PC-3 (cell line): ENCODE measurements at regions of chr1 and their contacts with region 1.

Region 1: GRCh38 chr1:226827968-226828513 is 42.4 kb upstream of the PSEN2 start:
- DNase-seq: peak; percentile 99
- ATAC-seq: peak; percentile 100
- H3K4me3 ChIP-seq: no peak overlapping the region
- H3K27ac ChIP-seq: peak overlapping the region; percentile 3; the same call in 1 of the 2 replicates
- H3K4me1 ChIP-seq: peaks cover 15% of the 10 kb centered on the region
- H3K27me3 ChIP-seq: no peaks in the 10 kb centered on the region
- CTCF ChIP-seq: peak; percentile 99

Region 2: DNA sequence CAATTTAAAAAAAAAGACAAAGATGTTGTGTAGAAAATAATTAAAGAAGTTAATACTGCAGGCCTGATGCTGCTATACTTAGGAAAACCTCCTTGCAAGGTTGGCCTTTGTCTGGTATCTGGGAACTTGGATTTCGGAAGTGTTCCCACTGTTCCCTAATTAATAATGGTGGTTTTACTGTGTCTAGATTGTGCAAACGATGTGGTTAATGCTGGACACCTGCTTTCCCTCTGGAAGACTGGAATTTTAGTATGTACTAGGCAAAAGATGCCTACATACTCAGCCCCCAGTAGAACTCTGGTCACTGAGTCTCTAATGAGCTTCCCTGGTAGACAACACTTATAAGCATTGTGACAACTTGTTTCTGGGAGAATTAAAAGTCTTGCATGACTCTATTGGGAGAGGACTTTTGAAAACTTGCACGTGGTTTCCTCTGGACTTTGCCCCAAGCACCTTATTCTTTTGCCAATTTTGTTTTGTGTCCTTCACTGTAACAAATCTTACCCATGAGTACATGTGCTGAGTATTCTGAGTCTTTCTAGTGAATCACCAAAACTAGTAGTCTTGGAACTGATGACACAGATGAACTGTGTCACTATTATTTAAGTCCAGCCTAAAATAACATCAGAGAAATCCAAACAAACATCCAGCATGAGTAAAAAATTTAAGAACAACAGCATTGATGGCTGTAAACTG is 559.5 kb before region 1 on chr1:
- CTCF ChIA-PET with region 1: no interaction called
- POLR2A ChIA-PET with region 1: no interaction called
- intact Hi-C with region 1: no loop called
- DNase-seq: peak; percentile 64
- ATAC-seq: peak; percentile 92
- H3K4me3 ChIP-seq: no peak overlapping the region
- H3K27ac ChIP-seq: peak overlapping the region; percentile 21
- H3K4me1 ChIP-seq: peaks cover 14% of the 10 kb centered on the region
- H3K27me3 ChIP-seq: no peaks in the 10 kb centered on the region
- CTCF ChIP-seq: no peak

Region 3: GRCh38 chr1:226626577-226626956 is 201.5 kb before region 1 on chr1:
- CTCF ChIA-PET with region 1: interaction called, 5 read pairs
- POLR2A ChIA-PET with region 1: no interaction called
- intact Hi-C with region 1: loop called (anchors 2 kb)
- DNase-seq: peak; percentile 88
- ATAC-seq: peak; percentile 79
- H3K4me3 ChIP-seq: no peak overlapping the region
- H3K27ac ChIP-seq: no peak overlapping the region
- H3K4me1 ChIP-seq: peaks cover 13% of the 10 kb centered on the region
- H3K27me3 ChIP-seq: no peaks in the 10 kb centered on the region
- CTCF ChIP-seq: peak; percentile 100

Region 4: DNA sequence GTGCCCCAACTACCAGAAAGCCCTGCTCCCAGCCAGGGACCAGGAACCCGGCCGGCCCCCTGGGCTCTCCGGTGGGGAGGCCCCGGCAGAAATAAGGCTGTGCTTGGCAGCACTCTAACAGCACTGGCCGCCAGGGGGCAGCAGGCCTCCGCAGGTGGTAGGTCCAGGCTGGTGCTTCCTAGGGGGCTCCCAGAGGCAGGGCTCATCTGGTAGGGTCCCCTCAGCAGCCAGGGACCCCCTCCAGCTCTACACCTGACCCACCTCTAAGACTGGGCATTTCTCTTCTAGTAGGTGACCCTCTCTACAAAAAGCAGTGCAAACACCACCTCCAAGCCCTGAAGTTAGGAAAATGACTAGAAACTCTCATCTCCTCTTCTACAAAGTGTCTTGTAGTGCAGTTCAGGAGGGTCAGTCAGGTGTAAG is 193.9 kb before region 1 on chr1:
- CTCF ChIA-PET with region 1: interaction called, 3 read pairs
- POLR2A ChIA-PET with region 1: no interaction called
- intact Hi-C with region 1: loop called (anchors 1 kb)
- DNase-seq: peak; percentile 88
- ATAC-seq: peak; percentile 91
- H3K4me3 ChIP-seq: no peak overlapping the region
- H3K27ac ChIP-seq: peak overlapping the region; percentile 72; the same call in 1 of the 2 replicates
- H3K4me1 ChIP-seq: peaks cover 21% of the 10 kb centered on the region
- H3K27me3 ChIP-seq: no peaks in the 10 kb centered on the region
- CTCF ChIP-seq: peak; percentile 100

Region 5: DNA sequence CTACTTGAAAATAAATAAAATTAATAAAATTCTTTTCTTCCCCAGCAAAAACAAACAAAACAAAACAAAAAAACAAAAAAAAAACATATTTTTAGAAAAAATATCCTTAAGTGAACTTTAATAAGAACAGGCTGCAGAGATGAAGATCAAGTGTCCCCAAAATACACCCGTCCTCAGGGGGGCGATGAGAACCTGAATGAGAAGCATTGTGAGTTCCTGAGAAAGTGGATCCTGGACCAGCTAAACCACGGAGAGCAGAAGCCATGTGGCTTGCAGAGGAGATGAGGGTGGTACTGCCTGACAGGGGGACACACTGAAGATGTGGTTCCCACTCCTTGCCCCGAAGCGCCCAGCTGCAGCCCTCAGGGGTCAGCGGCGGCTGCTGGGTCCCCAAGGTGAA is 178.3 kb before region 1 on chr1:
- CTCF ChIA-PET with region 1: interaction called, 3 read pairs
- POLR2A ChIA-PET with region 1: no interaction called
- intact Hi-C with region 1: loop called (anchors 1 kb)
- DNase-seq: peak; percentile 51
- ATAC-seq: peak; percentile 48; the same call in 1 of the 2 replicates
- H3K4me3 ChIP-seq: no peak overlapping the region
- H3K27ac ChIP-seq: no peak overlapping the region
- H3K4me1 ChIP-seq: peaks cover 17% of the 10 kb centered on the region
- H3K27me3 ChIP-seq: no peaks in the 10 kb centered on the region
- CTCF ChIP-seq: peak; percentile 58

Region 6: GRCh38 chr1:226763905-226764264 is 64.2 kb before region 1 on chr1:
- CTCF ChIA-PET with region 1: interaction called, 4 read pairs
- POLR2A ChIA-PET with region 1: no interaction called
- intact Hi-C with region 1: loop called (anchors 5 kb)
- DNase-seq: peak; percentile 97
- ATAC-seq: peak; percentile 95
- H3K4me3 ChIP-seq: no peak overlapping the region
- H3K27ac ChIP-seq: peak overlapping the region; percentile 48
- H3K4me1 ChIP-seq: peaks cover 35% of the 10 kb centered on the region
- H3K27me3 ChIP-seq: no peaks in the 10 kb centered on the region
- CTCF ChIP-seq: no peak

Region 7: DNA sequence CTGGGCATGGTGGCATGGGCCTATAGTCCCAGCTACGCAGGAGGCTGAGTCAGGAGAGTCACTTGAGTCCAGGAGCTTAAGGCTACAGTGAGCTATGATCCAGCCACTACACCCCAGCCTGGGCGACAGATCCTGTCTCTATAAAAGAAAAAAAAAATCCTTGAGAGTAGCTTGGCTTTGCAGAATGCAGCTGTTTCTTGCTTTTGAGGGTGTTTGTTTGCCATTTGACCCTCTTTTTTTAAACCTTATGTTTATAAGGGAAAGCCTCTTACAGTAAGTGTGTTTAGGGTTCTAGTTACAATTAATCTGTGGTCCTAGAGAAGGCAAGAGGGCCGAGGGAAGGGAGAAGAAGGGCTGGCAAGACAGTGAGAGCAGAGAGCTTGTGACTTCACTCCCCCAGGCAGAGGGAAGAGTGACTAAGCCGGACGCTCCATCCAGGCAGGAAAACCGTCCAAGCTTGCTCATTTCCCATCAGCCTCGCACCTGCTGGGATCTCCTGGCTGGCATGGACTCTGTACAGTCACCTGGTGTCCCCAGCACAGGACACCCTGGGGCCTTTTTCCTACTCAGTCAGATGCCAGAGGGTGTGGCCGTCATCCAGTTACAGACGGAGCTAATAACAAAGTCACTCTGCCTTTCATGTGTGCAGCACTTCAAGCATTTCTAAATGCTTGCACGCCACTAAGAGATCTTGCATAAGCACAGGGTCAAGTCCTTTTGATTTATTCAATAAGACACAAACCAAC is 13.1 kb before region 1 on chr1:
- CTCF ChIA-PET with region 1: interaction called, 12 read pairs
- POLR2A ChIA-PET with region 1: no interaction called
- intact Hi-C with region 1: no loop called
- DNase-seq: peak; percentile 100
- ATAC-seq: peak; percentile 97
- H3K4me3 ChIP-seq: peak overlapping the region; percentile 8; the same call in 1 of the 2 replicates
- H3K27ac ChIP-seq: peak overlapping the region; percentile 90
- H3K4me1 ChIP-seq: peaks cover 35% of the 10 kb centered on the region
- H3K27me3 ChIP-seq: no peaks in the 10 kb centered on the region
- CTCF ChIP-seq: no peak

Region 8: DNA sequence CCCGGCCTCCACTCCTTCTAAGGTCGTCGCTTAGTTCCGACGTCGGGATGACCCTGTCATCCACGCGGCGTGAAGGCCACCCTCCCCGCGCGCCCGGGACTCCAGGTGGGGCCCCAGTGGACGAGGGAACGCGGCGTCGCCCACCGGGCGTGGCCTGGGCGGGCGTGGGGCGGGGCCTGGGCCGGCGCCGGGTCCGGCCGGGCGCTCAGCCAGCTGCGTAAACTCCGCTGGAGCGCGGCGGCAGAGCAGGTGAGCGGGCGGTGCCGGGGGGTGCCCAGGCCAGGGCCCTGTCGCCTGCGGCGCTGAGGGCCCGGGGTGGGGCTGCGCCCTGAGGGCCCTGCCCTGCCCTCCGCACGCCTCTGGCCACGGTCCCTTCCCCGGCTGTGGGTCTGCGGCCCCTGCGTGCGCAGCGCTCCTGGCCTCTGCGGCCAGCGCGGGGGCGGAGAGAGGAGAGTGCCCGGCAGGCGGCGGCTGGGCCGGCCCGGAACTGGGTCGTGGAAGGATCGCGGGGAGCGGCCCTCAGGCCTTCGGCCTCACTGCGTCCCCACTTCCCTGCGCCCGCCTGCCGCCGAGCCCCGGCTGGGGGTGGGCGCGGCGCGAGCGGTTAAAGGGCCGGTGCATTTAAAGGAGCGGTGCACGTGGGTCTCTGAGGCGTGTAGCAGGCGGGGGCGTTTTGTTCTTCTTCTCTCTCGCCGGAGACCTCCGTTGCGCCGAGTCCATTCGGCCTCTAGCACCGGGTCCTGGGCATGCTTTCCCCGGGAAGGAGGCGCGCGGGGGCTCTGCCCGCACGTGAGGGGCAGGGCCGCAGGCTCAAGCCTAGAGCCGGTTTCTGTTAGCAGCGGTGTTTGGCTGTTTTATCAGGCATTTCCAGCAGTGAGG is 42.6 kb after region 1 on chr1 and contains the start of gene PSEN2:
- CTCF ChIA-PET with region 1: no interaction called
- POLR2A ChIA-PET with region 1: no interaction called
- intact Hi-C with region 1: no loop called
- DNase-seq: peak; percentile 92
- ATAC-seq: peak; percentile 74
- H3K4me3 ChIP-seq: peak within 1 kb of the TSS; percentile 81
- H3K27ac ChIP-seq: peak within 1 kb of the TSS; percentile 13
- H3K4me1 ChIP-seq: peaks cover 49% of the 10 kb centered on the region
- H3K27me3 ChIP-seq: no peaks in the 10 kb centered on the region
- CTCF ChIP-seq: peak; percentile 33; the same call in 1 of the 2 replicates
- total RNA-seq, gene PSEN2: 85.3 and 103 TPM in 2 replicates

Region 9: GRCh38 chr1:226882631-226883409 is 54.8 kb after region 1 on chr1:
- CTCF ChIA-PET with region 1: no interaction called
- POLR2A ChIA-PET with region 1: no interaction called
- intact Hi-C with region 1: no loop called
- DNase-seq: peak; percentile 72
- ATAC-seq: peak; percentile 74
- H3K4me3 ChIP-seq: no peak overlapping the region
- H3K27ac ChIP-seq: no peak overlapping the region
- H3K4me1 ChIP-seq: peaks cover 10% of the 10 kb centered on the region
- H3K27me3 ChIP-seq: no peaks in the 10 kb centered on the region
- CTCF ChIP-seq: no peak